ENCODE measurements at regions of chr17 and their contacts with region 1.

Region 1: DNA sequence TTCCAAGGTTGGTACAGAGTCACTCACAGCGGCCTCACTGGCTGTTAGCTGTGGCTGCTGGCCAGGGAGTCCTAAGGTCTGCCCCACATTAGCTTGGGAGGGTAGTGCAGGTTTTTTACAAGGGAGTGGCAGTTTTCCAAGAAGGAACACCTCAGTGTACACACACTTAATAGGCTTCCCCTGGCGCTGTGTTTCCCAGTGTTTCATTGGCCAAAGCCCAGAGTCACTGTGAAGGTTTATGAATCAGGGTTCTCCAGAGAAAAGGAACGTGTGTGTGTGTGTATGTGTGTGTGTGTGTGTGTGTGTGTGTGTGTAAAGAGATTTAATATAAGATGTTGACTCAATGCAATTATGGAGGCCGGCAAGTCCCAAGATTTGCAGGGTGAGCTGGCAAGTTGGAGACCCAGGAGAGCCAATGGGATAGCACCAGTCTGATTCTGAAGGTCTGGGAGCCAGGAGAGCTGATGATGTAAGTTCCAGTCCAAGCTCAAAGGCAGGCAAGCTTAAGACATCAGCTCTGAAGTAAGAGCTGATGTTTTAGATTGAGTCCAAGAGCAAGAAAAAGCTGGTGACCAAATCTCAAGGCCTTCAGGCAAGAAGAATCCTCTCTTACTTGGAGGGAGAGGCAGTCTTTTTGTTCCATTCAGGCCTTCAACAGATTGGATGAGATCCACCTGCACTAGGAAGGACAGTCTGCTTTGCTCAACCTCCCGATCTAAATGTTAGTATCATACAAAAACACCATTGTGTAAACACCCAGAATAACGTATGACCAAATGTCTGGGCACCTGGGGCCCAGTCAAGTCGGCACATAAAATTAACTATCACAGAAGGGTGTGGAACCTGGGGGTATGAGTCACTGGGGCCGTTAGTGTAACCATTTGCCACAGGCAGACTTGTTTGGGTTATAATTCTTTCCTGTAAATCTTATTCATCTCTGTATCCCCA is 206.8 kb downstream of the PRKCA start:
- DNase-seq: peak; percentile 62
- H3K4me3 ChIP-seq: no peak overlapping the region
- H3K27ac ChIP-seq: peak overlapping the region; percentile 28
- H3K4me1 ChIP-seq: peaks cover 20% of the 10 kb centered on the region
- H3K27me3 ChIP-seq: no peaks in the 10 kb centered on the region
- CTCF ChIP-seq: no peak
- POLR2A ChIP-seq: no peak

Region 2: DNA sequence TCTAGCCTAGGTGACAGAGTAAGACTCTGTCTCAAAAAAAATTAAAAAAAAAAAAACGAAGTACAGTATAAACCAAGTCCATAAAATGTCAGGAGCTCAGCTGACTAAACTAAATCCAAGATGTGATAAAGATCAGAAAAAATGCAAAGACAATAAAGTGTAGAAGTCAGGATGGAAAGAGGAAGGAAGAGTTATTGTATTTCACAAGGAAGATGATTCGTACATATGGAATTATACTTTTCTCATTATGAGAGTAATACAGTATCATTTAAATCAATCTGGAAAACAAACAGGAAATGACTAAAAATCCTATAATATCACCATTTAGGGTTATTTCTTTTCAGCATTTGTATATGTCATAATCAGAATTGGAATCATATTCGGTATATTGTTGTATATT is 268.5 kb before region 1 on chr17:
- CTCF ChIA-PET with region 1: no interaction called
- POLR2A ChIA-PET with region 1: no interaction called
- dilution Hi-C with region 1: no loop called
- intact Hi-C with region 1: no loop called
- DNase-seq: peak; percentile 49
- H3K4me3 ChIP-seq: no peak overlapping the region
- H3K27ac ChIP-seq: no peak overlapping the region
- H3K4me1 ChIP-seq: peaks cover 19% of the 10 kb centered on the region
- H3K27me3 ChIP-seq: no peaks in the 10 kb centered on the region
- CTCF ChIP-seq: no peak
- POLR2A ChIP-seq: no peak

Region 3: DNA sequence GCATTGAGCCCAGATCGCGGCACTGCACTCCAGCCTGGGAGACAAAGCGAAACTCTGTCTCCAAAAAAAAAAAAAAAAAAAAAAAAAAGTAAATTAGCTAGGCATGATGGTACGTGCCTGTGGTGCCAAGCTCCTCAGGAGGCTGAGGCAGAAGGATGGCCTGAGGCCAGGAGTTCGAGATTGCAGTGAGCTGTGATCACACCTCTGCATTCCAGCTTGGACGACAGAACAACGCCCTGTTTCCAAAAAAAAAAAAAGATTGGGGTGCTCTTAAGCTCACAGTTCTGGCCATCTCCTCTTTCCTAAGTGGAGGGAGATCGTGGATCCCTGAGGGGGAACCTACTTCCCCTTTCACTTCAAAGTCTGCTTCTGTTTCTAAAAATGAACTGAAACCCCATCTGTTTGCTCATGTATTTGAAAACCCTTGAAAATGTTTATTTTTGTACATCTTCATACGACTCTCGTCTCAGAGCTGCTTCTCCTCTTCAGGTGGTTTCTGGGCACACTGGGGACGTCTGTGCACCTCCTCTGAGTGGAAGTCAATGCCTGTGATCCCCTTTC is 68.0 kb before region 1 on chr17:
- CTCF ChIA-PET with region 1: no interaction called
- POLR2A ChIA-PET with region 1: no interaction called
- dilution Hi-C with region 1: no loop called
- intact Hi-C with region 1: no loop called
- DNase-seq: no peak
- H3K4me3 ChIP-seq: no peak overlapping the region
- H3K27ac ChIP-seq: no peak overlapping the region
- H3K4me1 ChIP-seq: no peaks in the 10 kb centered on the region
- H3K27me3 ChIP-seq: no peaks in the 10 kb centered on the region
- CTCF ChIP-seq: no peak
- POLR2A ChIP-seq: no peak

Region 4: GRCh38 chr17:66493991-66494803 is 15.0 kb before region 1 on chr17:
- CTCF ChIA-PET with region 1: interaction called, 15 read pairs
- POLR2A ChIA-PET with region 1: no interaction called
- dilution Hi-C with region 1: no loop called
- intact Hi-C with region 1: no loop called
- DNase-seq: peak; percentile 66
- H3K4me3 ChIP-seq: no peak overlapping the region
- H3K27ac ChIP-seq: peak overlapping the region; percentile 14
- H3K4me1 ChIP-seq: peaks cover 24% of the 10 kb centered on the region
- H3K27me3 ChIP-seq: no peaks in the 10 kb centered on the region
- CTCF ChIP-seq: no peak
- POLR2A ChIP-seq: no peak

Region 5: DNA sequence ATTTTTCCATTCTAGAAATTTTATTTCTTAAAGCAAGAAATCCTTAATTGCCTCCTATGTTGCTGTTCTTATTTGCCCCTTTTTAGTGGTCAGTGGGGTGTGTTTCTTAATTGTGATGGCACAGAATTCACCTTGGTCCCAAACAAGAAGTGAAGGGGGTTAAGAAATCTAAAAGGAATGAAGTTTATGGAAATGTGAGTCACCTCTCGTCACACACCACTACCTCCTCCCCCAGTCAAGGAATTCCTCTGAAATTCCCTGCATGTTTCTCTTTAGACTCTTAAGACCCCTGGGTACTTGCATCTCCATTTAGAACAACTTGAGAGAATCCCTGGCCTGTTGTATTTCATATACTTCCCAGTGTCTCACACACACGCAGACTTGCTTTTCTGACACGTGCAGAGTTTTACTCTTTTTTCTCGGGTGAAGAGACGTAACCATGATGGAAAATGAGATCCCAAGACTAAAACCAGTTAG is 40.6 kb after region 1 on chr17:
- CTCF ChIA-PET with region 1: no interaction called
- POLR2A ChIA-PET with region 1: interaction called, 3 read pairs
- dilution Hi-C with region 1: no loop called
- intact Hi-C with region 1: loop called (anchors 1 kb)
- DNase-seq: peak; percentile 46
- H3K4me3 ChIP-seq: no peak overlapping the region
- H3K27ac ChIP-seq: peak overlapping the region; percentile 33
- H3K4me1 ChIP-seq: peaks cover 39% of the 10 kb centered on the region
- H3K27me3 ChIP-seq: no peaks in the 10 kb centered on the region
- CTCF ChIP-seq: no peak
- POLR2A ChIP-seq: no peak

Measured in endothelial cell of umbilical vein (primary cell).